ENCODE measurements at regions of chr20 and their contacts with region 1.

Region 1: GRCh38 chr20:60573003-60573680 is 614.9 kb downstream of the CDH26 start:
- DNase-seq: no peak
- H3K27ac ChIP-seq: no peak overlapping the region
- CTCF ChIP-seq: no peak

Region 2: GRCh38 chr20:60332518-60332917 is 240.6 kb before region 1 on chr20:
- CTCF ChIA-PET with region 1: interaction called, 10 read pairs
- POLR2A ChIA-PET with region 1: no interaction called
- DNase-seq: peak; percentile 25
- H3K27ac ChIP-seq: no peak overlapping the region
- CTCF ChIP-seq: no peak

Region 3: GRCh38 chr20:61414455-61414991 is 841.4 kb after region 1 on chr20:
- CTCF ChIA-PET with region 1: no interaction called
- POLR2A ChIA-PET with region 1: no interaction called
- DNase-seq: no peak
- H3K27ac ChIP-seq: no peak overlapping the region
- CTCF ChIP-seq: no peak

Measured in RWPE1 (cell line).